Activated B cell treated with CpG ODN at 0.5 μM for 24 hours (primary cell): ENCODE measurements at regions of chr1 and their contacts with region 1.

Region 1: DNA sequence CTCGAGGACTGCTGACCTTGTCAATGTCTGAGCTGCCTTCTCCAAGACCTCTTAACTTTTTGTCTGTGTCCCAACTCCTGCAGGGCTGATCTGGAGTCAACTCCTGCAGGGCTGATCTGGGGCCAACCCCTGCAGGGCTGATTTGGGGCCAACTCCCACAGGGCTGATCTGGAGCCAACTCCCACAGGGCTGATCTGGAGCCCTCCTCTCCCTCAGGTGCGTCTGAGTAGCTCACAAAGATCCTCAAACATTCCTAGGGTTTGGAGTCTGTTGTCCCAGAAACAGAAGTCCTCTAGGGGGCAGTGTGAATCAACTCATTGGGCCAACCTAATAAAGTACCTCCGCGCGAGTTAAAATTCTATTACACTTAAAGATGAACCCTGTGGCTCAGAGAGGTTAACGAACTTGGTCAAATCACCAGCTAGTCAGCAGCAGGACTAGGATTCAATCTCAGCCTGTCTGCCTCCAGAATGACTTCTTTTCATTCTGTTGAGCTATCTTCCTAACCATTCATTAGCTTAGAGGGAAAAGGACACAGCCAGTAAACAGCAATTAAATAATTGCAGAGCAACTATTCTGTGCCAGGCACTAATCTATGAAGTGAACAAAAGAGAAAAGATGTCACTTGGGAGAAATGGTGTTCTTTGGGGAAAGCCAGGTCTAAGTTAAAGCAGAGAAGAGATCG is 17.2 kb upstream of the RLF start:
- DNase-seq: peak; percentile 22
- ATAC-seq: peak; percentile 83
- H3K4me3 Mint-ChIP-seq: no peak overlapping the region
- H3K27ac Mint-ChIP-seq: no peak overlapping the region
- H3K4me1 Mint-ChIP-seq: peaks cover 6% of the 10 kb centered on the region
- H3K27me3 Mint-ChIP-seq: peaks cover 9% of the 10 kb centered on the region
- CTCF ChIP-seq: no peak

Region 2: DNA sequence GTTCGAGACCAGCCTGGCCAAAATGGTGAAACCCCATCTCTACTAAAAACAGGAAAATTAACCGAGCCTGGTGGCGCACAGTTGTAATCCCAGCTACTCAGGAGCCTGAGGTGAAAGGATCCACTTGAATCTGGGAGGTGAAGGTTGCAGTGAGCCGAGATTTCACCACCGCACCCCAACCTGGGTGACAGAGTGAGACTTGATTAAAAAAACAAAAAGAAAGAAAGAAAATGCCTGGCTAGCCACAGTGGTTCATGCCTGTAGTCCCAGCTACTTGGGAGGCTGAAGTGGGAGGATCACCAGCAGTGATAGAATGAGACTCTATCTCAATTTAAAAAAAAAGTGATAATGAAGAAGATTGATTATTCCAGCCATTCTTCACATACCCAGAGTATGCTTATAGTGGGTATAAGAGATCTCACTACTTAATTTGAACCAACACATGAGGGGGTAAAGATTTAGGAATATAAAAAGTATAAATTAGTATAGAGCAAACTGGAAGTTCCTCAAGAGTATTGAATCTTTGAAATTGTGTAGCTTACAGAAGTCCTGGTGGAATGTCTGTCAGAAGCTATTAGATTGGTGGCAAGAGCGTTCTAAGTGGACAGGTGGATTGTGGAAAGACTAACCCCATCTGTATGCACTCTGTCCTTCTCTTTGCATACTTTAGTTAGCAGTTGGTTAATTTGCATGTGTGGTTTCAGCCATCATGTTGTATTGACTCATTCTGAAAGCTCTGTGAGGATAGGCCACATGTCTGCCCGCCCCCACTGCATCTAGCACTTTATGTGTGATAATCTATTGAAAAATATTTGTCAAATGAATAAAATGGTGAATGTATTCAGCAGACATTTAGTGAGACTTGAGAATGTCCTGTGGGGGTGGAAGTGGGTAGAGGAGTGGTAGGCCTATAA is 42.2 kb after region 1 on chr1:
- CTCF ChIA-PET with region 1: interaction called, 18 read pairs
- POLR2A ChIA-PET with region 1: no interaction called
- intact Hi-C with region 1: no loop called
- DNase-seq: peak; percentile 26
- ATAC-seq: peak; percentile 98
- H3K4me3 Mint-ChIP-seq: peak overlapping the region; percentile 59
- H3K27ac Mint-ChIP-seq: peak overlapping the region; percentile 62
- H3K4me1 Mint-ChIP-seq: peaks cover 50% of the 10 kb centered on the region
- H3K27me3 Mint-ChIP-seq: no peaks in the 10 kb centered on the region
- CTCF ChIP-seq: no peak

Region 3: GRCh38 chr1:40197656-40198055 is 53.6 kb after region 1 on chr1:
- CTCF ChIA-PET with region 1: interaction called, 11 read pairs
- POLR2A ChIA-PET with region 1: no interaction called
- intact Hi-C with region 1: no loop called
- DNase-seq: no peak
- ATAC-seq: no peak
- H3K4me3 Mint-ChIP-seq: no peak overlapping the region
- H3K27ac Mint-ChIP-seq: no peak overlapping the region
- H3K4me1 Mint-ChIP-seq: no peaks in the 10 kb centered on the region
- H3K27me3 Mint-ChIP-seq: no peaks in the 10 kb centered on the region
- CTCF ChIP-seq: no peak

Region 4: DNA sequence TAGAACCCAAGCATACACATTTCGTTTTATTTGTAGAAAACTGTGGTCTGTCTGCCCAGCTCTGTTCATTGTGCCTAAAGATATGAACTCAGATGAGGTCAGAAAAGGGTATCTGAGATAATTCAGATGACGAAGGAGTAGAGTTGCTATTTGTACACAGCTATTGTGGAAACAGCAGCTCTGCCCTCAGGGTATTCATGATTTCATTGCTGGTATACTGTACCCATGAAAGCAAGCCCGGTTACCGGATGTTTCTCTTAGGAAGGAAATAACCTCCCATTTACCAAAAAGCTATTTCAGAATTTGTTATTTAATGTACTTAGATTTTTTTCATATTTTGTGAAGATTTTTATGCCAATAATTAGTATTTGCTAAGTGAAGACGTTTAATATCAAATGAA is 267.3 kb after region 1 on chr1:
- CTCF ChIA-PET with region 1: interaction called, 11 read pairs
- POLR2A ChIA-PET with region 1: no interaction called
- intact Hi-C with region 1: no loop called
- DNase-seq: no peak
- ATAC-seq: no peak
- H3K4me3 Mint-ChIP-seq: no peak overlapping the region
- H3K27ac Mint-ChIP-seq: no peak overlapping the region
- H3K4me1 Mint-ChIP-seq: peaks cover 3% of the 10 kb centered on the region
- H3K27me3 Mint-ChIP-seq: no peaks in the 10 kb centered on the region
- CTCF ChIP-seq: no peak

Region 5: DNA sequence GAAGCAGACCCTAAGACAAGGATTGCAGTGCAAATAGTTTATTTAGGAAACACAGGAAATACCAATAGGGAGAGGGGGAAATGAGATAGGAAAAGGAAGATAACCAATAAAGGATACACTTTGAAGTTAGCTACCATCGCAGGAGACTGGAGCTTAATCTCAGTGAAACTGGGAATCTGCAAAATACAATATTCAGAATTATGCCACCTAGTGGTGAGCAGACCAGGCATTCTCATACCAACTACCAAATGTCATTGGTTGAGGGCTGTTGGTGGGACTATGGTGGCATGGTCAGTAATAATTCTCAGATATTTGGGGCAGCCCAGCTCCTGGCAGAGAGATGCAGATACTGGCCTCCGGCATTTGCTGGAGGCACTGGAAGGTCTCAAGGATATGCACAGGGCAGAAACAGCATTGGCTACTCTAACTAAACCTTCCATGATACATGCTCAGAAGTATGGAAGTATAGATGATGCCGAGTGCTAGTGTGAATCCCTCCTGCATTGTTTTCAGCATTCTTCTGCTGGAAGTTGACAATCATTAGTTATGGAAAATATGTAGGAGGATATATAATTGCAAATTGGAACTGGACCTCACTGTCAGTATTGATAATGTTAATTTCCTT is 294.5 kb after region 1 on chr1:
- CTCF ChIA-PET with region 1: interaction called, 31 read pairs
- POLR2A ChIA-PET with region 1: interaction called, 3 read pairs
- intact Hi-C with region 1: loop called (anchors 1 kb)
- DNase-seq: no peak
- ATAC-seq: peak; percentile 49
- H3K4me3 Mint-ChIP-seq: no peak overlapping the region
- H3K27ac Mint-ChIP-seq: no peak overlapping the region
- H3K4me1 Mint-ChIP-seq: peaks cover 4% of the 10 kb centered on the region
- H3K27me3 Mint-ChIP-seq: no peaks in the 10 kb centered on the region
- CTCF ChIP-seq: no peak

Region 6: DNA sequence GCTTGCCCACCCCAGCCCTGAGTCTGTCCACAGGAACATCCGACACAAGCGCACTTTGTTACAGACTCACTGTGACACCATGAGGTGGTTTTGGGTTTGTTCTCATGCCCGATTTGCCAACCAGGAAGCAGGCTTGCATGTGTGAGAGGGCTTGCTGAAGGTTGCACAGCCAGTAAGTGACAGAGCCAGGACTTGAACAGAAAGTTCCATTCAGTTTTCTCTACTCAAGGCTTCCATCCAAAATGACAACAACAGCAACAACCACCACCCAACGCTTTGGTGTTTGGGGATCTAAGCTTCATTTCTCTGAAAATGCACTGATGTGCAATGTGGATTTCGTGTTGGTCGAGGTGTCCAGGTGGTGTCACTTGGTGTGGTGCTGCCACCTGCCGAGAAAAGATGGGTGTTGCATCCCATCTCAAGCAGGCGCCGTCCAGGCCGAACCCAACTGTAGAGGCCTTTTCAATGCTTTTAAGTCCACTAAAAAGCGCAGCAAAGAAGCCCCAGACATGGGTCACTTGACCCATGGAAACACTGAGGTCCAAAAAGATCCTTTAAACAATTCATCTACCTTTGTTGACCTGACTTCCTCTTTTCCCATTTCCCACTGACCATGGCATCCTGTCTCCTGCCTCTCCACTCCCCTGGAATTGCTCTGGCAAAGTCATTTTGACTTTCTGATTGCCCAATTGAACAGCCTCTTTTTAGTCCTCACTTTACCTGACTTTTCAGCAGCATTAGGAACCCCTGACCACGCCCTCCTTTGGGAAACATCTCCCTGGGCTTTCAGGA is 706.0 kb after region 1 on chr1:
- CTCF ChIA-PET with region 1: no interaction called
- POLR2A ChIA-PET with region 1: no interaction called
- intact Hi-C with region 1: loop called (anchors 2 kb)
- DNase-seq: peak; percentile 67
- ATAC-seq: peak; percentile 97
- H3K4me3 Mint-ChIP-seq: no peak overlapping the region
- H3K27ac Mint-ChIP-seq: no peak overlapping the region
- H3K4me1 Mint-ChIP-seq: peaks cover 10% of the 10 kb centered on the region
- H3K27me3 Mint-ChIP-seq: no peaks in the 10 kb centered on the region
- CTCF ChIP-seq: peak; percentile 46